ENCODE measurements at regions of chr9 and their contacts with region 1.

Region 1: DNA sequence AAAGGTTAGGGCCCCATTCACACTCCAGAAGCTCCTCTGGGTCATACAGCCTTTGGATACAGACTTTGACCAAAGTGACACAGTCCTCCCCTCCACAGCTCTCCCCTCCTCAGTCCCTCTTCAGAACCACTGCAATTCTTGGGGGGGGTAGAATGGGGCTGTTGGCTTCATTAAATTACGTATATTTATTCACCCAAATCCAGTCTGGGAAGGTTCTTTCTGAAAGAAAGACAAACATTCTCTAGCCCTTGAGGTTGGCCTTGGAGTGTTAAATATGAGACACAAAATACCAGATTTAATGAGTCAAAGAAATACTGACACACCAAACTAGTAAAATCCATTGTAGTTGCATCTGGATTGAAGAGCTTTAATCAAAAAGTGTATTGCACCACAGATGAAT is 16.1 kb downstream of the ARPC5L start:
- DNase-seq: no peak
- H3K4me3 ChIP-seq: no peak overlapping the region
- H3K27ac ChIP-seq: no peak overlapping the region
- H3K27me3 ChIP-seq: no peaks in the 10 kb centered on the region
- CTCF ChIP-seq: no peak

Region 2: GRCh38 chr9:124861342-124862229 is 16.4 kb before region 1 on chr9 and contains the starts of genes ARPC5L and RPL35:
- CTCF ChIA-PET with region 1: interaction called, 3 read pairs
- POLR2A ChIA-PET with region 1: interaction called, 10 read pairs
- DNase-seq: peak; percentile 72
- H3K4me3 ChIP-seq: peak within 1 kb of the TSS; percentile 95
- H3K27ac ChIP-seq: peak within 1 kb of the TSS; percentile 81
- H3K27me3 ChIP-seq: no peaks in the 10 kb centered on the region
- CTCF ChIP-seq: peak; percentile 19
- polyA plus RNA-seq, gene ARPC5L: 45.8 and 62.0 TPM in 2 replicates
- polyA plus RNA-seq, gene RPL35: 1,392 and 2,283 TPM in 2 replicates

Region 3: GRCh38 chr9:124906966-124907365 is 28.9 kb after region 1 on chr9:
- CTCF ChIA-PET with region 1: no interaction called
- POLR2A ChIA-PET with region 1: no interaction called
- DNase-seq: no peak
- H3K4me3 ChIP-seq: no peak overlapping the region
- H3K27ac ChIP-seq: no peak overlapping the region
- H3K27me3 ChIP-seq: no peaks in the 10 kb centered on the region
- CTCF ChIP-seq: no peak

Region 4: DNA sequence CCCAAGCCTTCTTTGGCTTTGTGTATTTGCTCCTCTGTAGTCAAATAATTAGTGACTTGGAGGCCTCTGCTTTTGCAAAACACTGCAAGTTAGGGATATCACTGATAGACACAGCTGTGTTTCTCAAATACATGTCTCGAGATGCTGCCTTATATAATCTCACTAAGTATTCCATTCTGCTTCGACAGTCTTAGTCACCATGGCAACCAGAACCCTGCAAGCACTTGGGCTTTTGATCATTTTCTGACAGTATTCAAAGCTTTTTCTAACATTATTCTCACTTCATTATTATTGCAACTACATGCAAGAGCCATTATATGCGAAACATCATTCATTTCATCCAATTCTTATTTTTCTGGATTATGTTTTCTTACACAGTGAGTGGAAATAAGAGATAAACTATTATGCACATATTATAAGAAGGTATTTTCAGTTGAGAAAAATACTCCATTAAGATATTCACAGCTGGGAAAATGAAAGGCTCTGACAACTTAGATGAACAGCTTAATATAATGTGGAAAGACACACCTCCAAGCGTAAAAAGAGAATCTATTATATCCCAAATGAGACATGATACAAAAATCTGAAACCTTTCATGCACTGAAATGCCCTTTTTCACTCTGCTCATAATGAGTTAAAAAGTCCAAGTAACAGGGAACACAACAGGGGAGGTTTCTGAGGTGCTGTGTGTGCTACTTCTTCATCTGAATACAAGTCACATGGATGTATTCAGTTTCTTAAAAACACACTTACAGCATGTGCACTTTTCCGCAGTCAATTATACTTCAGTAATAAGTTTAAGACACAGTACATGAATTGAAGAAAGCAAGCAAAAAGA is 171.4 kb after region 1 on chr9:
- CTCF ChIA-PET with region 1: no interaction called
- POLR2A ChIA-PET with region 1: no interaction called
- DNase-seq: no peak
- H3K4me3 ChIP-seq: no peak overlapping the region
- H3K27ac ChIP-seq: no peak overlapping the region
- H3K27me3 ChIP-seq: no peaks in the 10 kb centered on the region
- CTCF ChIP-seq: no peak

Measured in AG04450 (cell line).